ENCODE measurements at regions of chr22 and their contacts with region 1.

Region 1: DNA sequence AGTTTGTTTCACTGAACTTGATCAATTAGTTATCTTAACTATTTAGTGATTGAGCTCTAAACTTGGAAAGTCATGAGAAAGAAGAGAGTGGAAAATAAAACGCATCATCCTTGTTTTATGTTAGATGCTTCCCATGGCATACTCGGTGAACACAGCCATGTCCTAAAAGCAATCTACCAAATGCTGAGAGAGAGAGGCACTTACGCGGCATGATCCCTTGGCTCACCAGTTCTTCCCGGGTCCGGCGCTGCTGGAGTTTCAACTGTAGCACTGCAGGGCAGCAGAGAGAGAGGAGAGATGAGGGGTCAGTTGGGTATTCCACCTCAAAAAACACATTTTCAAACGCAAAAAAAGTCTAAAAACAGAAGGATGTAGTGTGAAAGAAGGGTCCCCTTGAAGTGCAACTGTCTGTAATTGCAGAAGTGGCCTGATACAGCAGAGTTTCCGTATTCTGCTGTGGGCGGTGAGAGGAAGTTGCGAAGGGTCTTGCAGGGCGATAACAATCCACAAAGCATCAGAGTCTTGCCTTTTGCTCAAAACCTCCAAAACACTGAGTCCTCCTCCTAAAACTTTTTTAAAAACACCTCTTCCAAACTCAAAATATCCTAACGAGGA is 92.7 kb downstream of the SGSM3 start:
- DNase-seq: peak; percentile 66
- H3K4me3 Mint-ChIP-seq: peak overlapping the region; percentile 97
- H3K27ac Mint-ChIP-seq: peak overlapping the region; percentile 97
- H3K4me1 Mint-ChIP-seq: peaks cover 68% of the 10 kb centered on the region
- H3K27me3 Mint-ChIP-seq: no peaks in the 10 kb centered on the region

Region 2: DNA sequence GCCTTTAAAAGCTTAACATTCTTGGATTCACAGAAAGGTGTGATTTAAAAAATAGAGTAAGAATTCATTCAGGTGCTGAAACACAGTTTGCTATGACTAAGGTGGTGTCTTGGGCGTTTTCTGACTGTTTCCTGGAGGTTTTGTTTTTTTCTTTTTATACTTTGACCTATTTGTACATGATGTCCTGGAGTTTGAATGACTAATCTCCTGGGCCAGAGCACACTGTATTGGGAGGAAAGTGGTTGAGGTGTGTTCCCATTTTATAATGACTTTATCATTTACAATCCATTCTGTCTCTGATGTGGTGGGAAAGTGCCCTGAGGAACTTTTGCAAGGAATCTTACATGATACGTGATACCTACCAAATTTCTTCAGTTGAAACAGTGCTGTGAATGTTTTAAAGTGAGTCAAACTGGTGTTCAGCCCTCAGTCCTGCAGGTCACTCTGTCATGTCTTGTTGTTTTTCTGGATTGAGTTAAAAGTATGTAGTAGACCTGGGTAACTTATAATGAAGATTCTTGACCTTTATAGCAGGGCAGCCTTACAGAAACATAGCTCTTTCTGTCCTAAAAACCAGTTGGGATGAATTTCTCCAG is 204.6 kb before region 1 on chr22:
- CTCF ChIA-PET with region 1: no interaction called
- intact Hi-C with region 1: no loop called
- DNase-seq: peak; percentile 46
- H3K4me3 Mint-ChIP-seq: no peak overlapping the region
- H3K27ac Mint-ChIP-seq: peak overlapping the region; percentile 66
- H3K4me1 Mint-ChIP-seq: peaks cover 60% of the 10 kb centered on the region
- H3K27me3 Mint-ChIP-seq: no peaks in the 10 kb centered on the region

Region 3: DNA sequence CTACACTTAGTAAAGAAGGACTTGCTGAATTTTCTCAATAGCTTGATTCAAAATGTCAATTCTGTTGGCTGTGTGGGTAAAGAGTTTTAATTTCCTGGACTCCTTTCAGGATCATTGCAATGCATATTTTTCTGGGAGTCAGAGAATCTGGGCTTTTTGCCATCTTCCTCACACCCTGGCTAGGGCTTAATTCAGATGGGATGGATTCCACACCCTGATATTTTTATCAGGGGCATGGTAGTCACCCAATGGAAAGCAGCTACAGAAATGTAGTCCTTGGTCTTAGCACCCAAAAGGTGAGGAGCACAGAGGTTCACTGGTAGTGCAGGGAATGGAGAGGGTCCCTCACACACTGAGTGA is 13.5 kb before region 1 on chr22:
- CTCF ChIA-PET with region 1: interaction called, 4 read pairs
- intact Hi-C with region 1: loop called (anchors 1 kb)
- DNase-seq: no peak
- H3K4me3 Mint-ChIP-seq: no peak overlapping the region
- H3K27ac Mint-ChIP-seq: no peak overlapping the region
- H3K4me1 Mint-ChIP-seq: peaks cover 78% of the 10 kb centered on the region
- H3K27me3 Mint-ChIP-seq: no peaks in the 10 kb centered on the region

Measured in activated naive CD4-positive, alpha-beta T cell treated with anti-CD3 and anti-CD28 coated beads for 36 hours (primary cell).